ENCODE measurements at regions of chr2 and their contacts with region 1.

Region 1: DNA sequence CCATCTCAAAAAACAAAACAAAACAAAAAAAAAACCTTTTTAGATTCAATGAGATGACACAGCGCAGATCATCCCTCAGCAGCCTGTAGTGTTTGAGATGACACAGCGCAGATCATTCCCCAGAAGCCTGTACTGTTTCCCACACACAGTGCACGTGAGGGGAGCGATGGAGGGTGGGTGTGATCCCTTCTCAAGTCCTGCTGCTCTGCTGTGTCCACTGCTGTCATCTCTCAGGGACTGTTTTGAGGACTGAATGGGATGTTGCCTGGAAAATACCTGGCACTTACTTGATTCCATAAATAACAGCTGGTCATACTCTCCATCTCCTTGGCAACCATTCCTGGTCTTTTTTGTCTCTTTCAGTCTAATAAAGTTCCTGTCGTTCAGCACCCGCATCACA is 25.7 kb downstream of the TGOLN2 start:
- DNase-seq: no peak
- ATAC-seq: no peak
- H3K4me3 ChIP-seq: no peak overlapping the region
- H3K27ac ChIP-seq: no peak overlapping the region
- H3K4me1 ChIP-seq: no peaks in the 10 kb centered on the region
- H3K27me3 ChIP-seq: no peaks in the 10 kb centered on the region
- CTCF ChIP-seq: no peak

Region 2: GRCh38 chr2:85066874-85067351 is 235.2 kb before region 1 on chr2:
- CTCF ChIA-PET with region 1: interaction called, 9 read pairs
- POLR2A ChIA-PET with region 1: no interaction called
- intact Hi-C with region 1: loop called (anchors 1 kb)
- DNase-seq: peak; percentile 83
- ATAC-seq: peak; percentile 86
- H3K4me3 ChIP-seq: peak overlapping the region; percentile 57; the same call in 1 of the 2 replicates
- H3K27ac ChIP-seq: no peak overlapping the region
- H3K4me1 ChIP-seq: peaks cover 10% of the 10 kb centered on the region; the same call in 1 of the 2 replicates
- H3K27me3 ChIP-seq: no peaks in the 10 kb centered on the region
- CTCF ChIP-seq: peak; percentile 92

Region 3: GRCh38 chr2:85160966-85161960 is 140.9 kb before region 1 on chr2:
- CTCF ChIA-PET with region 1: no interaction called
- POLR2A ChIA-PET with region 1: no interaction called
- intact Hi-C with region 1: no loop called
- DNase-seq: no peak
- ATAC-seq: peak; percentile 31; the same call in 1 of the 2 replicates
- H3K4me3 ChIP-seq: no peak overlapping the region
- H3K27ac ChIP-seq: no peak overlapping the region
- H3K4me1 ChIP-seq: no peaks in the 10 kb centered on the region
- H3K27me3 ChIP-seq: no peaks in the 10 kb centered on the region
- CTCF ChIP-seq: no peak

Region 4: DNA sequence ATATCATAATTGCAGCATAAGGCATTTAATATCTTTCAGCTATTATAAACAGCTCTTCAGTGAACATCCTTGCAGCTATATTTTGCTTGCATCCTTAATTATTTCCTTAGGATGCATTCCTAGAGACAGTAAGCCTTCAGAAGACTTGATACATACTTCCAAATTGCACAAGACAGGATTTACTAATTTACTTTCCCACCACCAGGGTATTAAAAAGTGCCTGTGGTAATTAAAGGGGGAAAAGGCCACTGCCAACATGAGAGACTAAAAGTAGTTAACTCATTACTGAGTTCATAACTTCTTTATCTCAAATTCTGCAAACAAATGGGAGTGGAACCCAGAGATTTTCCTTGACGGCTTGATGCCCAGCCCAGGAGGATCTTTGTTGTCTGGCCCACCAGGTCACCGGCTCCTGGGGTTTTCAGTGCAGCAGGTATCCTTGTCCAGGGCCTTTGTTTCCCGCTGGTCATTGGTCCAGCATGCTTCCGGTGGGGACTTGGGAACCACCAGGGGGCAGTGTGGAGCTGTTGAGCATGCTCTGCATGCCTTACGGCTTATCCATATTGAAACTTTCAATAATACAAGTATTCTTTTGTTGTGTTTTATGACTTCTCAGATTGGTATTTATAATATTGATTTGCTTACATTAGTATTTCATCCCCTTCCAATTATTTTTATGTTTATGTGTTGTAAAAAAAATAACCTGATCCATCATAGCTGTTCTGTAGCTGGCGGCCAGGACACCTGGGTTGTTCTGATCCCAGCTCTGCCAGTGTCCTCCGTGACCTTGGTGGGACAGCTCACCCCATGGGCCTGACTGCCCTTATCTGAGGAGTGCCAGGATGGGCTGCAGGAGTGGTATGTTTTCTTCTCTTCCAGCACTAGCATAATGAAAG is 35.7 kb before region 1 on chr2:
- CTCF ChIA-PET with region 1: no interaction called
- POLR2A ChIA-PET with region 1: no interaction called
- intact Hi-C with region 1: loop called (anchors 1 kb)
- DNase-seq: peak; percentile 69
- ATAC-seq: peak; percentile 66
- H3K4me3 ChIP-seq: no peak overlapping the region
- H3K27ac ChIP-seq: no peak overlapping the region
- H3K4me1 ChIP-seq: no peaks in the 10 kb centered on the region
- H3K27me3 ChIP-seq: no peaks in the 10 kb centered on the region
- CTCF ChIP-seq: peak; percentile 96

Region 5: GRCh38 chr2:85288244-85288725 is 13.8 kb before region 1 on chr2:
- CTCF ChIA-PET with region 1: no interaction called
- POLR2A ChIA-PET with region 1: interaction called, 6 read pairs
- intact Hi-C with region 1: loop called (anchors 1 kb)
- DNase-seq: peak; percentile 88
- ATAC-seq: peak; percentile 80
- H3K4me3 ChIP-seq: peak overlapping the region; percentile 14
- H3K27ac ChIP-seq: peak overlapping the region; percentile 71
- H3K4me1 ChIP-seq: peaks cover 27% of the 10 kb centered on the region
- H3K27me3 ChIP-seq: no peaks in the 10 kb centered on the region
- CTCF ChIP-seq: no peak

Region 6: GRCh38 chr2:85318222-85319074 is 16.3 kb after region 1 on chr2:
- CTCF ChIA-PET with region 1: no interaction called
- POLR2A ChIA-PET with region 1: no interaction called
- intact Hi-C with region 1: no loop called
- DNase-seq: peak; percentile 35
- ATAC-seq: peak; percentile 79
- H3K4me3 ChIP-seq: no peak overlapping the region
- H3K27ac ChIP-seq: peak overlapping the region; percentile 41
- H3K4me1 ChIP-seq: peaks cover 8% of the 10 kb centered on the region; the same call in 1 of the 2 replicates
- H3K27me3 ChIP-seq: no peaks in the 10 kb centered on the region
- CTCF ChIP-seq: no peak

Region 7: DNA sequence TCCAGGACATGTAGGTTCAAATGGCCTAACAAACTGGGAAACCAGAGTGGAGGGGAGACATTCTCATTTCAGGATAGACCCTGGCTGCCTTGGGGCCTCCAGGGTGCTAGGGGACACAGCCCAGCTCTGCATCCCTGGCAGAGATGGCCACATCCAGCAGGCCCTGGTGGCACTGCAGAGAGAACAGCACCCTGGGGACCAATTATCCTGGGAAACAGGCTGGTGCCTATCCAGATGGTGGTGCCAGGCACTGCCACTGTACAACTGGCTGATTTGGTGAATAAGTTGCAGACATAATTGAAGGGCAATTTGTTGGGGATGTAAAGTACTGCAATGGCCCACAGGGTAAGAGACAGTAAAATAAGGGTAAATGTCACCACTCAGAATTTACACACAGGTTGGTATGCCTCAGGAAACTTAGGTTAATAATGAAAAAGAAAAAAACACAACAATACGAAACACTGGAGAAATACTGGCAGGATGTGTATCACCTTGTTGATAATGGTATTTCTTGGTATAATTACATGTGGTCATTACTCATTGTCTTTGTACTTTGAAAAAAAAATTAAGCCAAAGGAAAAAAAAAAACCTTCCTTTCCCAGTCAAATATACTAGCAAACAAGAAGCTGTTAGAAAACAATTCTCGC is 378.7 kb after region 1 on chr2:
- CTCF ChIA-PET with region 1: no interaction called
- POLR2A ChIA-PET with region 1: no interaction called
- intact Hi-C with region 1: no loop called
- DNase-seq: peak; percentile 17
- ATAC-seq: peak; percentile 20; the same call in 1 of the 2 replicates
- H3K4me3 ChIP-seq: no peak overlapping the region
- H3K27ac ChIP-seq: no peak overlapping the region
- H3K4me1 ChIP-seq: peaks cover 19% of the 10 kb centered on the region
- H3K27me3 ChIP-seq: no peaks in the 10 kb centered on the region
- CTCF ChIP-seq: no peak

Measured in PC-3 (cell line).